Endothelial cell of umbilical vein (primary cell): ENCODE measurements at regions of chr19 and their contacts with region 1.

Region 1: GRCh38 chr19:18521885-18522624 is at the start of gene ELL:
- DNase-seq: peak; percentile 100
- H3K4me3 ChIP-seq: peak within 1 kb of the TSS; percentile 71 to 85 (median 82)
- H3K27ac ChIP-seq: peak within 1 kb of the TSS; percentile 89
- H3K4me1 ChIP-seq: peaks cover 12% of the 10 kb centered on the region
- H3K27me3 ChIP-seq: no peaks in the 10 kb centered on the region
- CTCF ChIP-seq: peak in 1 of 2 donors; percentile 7
- POLR2A ChIP-seq: peak; percentile 95
- total RNA-seq, gene ELL: 15.5 and 18.2 TPM in 2 replicates

Region 2: DNA sequence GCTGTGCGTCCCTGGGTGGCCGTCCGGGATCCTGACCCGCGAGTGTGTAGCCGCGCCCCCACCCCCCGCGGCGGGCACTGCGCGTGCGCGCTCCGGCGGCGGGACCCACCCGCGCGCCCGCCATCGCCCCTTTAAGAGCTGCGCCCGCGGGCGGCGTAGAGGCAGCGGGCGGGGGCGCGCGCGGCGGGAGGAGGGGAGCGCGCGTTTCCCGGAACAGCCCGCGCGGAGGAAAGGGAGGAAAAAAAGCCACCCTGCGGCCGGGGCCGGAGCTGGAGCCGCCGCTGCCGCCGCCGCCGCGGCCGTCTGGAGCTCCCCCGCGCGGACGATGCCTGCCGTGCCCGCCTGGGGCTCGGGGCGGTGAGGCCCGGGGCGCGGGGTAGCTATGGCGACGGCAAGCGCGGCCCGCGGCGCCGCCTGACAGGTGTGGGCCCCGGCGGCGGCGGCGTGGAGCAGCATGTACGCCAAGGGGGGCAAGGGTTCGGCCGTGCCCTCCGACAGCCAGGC is 102.8 kb before region 1 on chr19 and contains the start of gene SSBP4:
- CTCF ChIA-PET with region 1: no interaction called
- POLR2A ChIA-PET with region 1: no interaction called
- dilution Hi-C with region 1: no loop called
- intact Hi-C with region 1: loop called (anchors 2 kb)
- DNase-seq: peak; percentile 76
- H3K4me3 ChIP-seq: peak within 1 kb of the TSS; percentile 50 to 73 (median 53)
- H3K27ac ChIP-seq: peak within 1 kb of the TSS; percentile 54
- H3K4me1 ChIP-seq: peaks cover 46% of the 10 kb centered on the region
- H3K27me3 ChIP-seq: no peaks in the 10 kb centered on the region
- CTCF ChIP-seq: peak; percentile 19 to 31
- POLR2A ChIP-seq: peak; percentile 49
- total RNA-seq, gene SSBP4: 140 and 151 TPM in 2 replicates

Region 3: GRCh38 chr19:18488838-18489626 is 33.0 kb before region 1 on chr19:
- CTCF ChIA-PET with region 1: interaction called, 18 read pairs
- POLR2A ChIA-PET with region 1: no interaction called
- dilution Hi-C with region 1: no loop called
- intact Hi-C with region 1: loop called (anchors 1 kb)
- DNase-seq: peak; percentile 26
- H3K4me3 ChIP-seq: no peak overlapping the region
- H3K27ac ChIP-seq: no peak overlapping the region
- H3K4me1 ChIP-seq: peaks cover 9% of the 10 kb centered on the region
- H3K27me3 ChIP-seq: no peaks in the 10 kb centered on the region
- CTCF ChIP-seq: peak in 1 of 2 donors; percentile 42
- POLR2A ChIP-seq: no peak

Region 4: GRCh38 chr19:18542936-18543815 is 21.1 kb after region 1 on chr19 and contains the start of gene FKBP8:
- CTCF ChIA-PET with region 1: interaction called, 3 read pairs
- POLR2A ChIA-PET with region 1: interaction called, 4 read pairs
- dilution Hi-C with region 1: no loop called
- intact Hi-C with region 1: loop called (anchors 1 kb)
- DNase-seq: peak; percentile 87
- H3K4me3 ChIP-seq: peak within 1 kb of the TSS; percentile 61 to 85 (median 76)
- H3K27ac ChIP-seq: peak within 1 kb of the TSS; percentile 12
- H3K4me1 ChIP-seq: peaks cover 12% of the 10 kb centered on the region
- H3K27me3 ChIP-seq: no peaks in the 10 kb centered on the region
- CTCF ChIP-seq: no peak
- POLR2A ChIP-seq: no peak
- total RNA-seq, gene FKBP8: 150 and 164 TPM in 2 replicates

Region 5: GRCh38 chr19:18571564-18572300 is 49.7 kb after region 1 on chr19 and contains the start of gene UBA52:
- CTCF ChIA-PET with region 1: interaction called, 6 read pairs
- POLR2A ChIA-PET with region 1: interaction called, 5 read pairs
- dilution Hi-C with region 1: no loop called
- intact Hi-C with region 1: loop called (anchors 1 kb)
- DNase-seq: peak; percentile 98
- H3K4me3 ChIP-seq: peak within 1 kb of the TSS; percentile 66 to 91 (median 68)
- H3K27ac ChIP-seq: peak within 1 kb of the TSS; percentile 60
- H3K4me1 ChIP-seq: peaks cover 16% of the 10 kb centered on the region
- H3K27me3 ChIP-seq: no peaks in the 10 kb centered on the region
- CTCF ChIP-seq: no peak
- POLR2A ChIP-seq: peak; percentile 92
- total RNA-seq, gene UBA52: 1,218 and 1,221 TPM in 2 replicates

Region 6: DNA sequence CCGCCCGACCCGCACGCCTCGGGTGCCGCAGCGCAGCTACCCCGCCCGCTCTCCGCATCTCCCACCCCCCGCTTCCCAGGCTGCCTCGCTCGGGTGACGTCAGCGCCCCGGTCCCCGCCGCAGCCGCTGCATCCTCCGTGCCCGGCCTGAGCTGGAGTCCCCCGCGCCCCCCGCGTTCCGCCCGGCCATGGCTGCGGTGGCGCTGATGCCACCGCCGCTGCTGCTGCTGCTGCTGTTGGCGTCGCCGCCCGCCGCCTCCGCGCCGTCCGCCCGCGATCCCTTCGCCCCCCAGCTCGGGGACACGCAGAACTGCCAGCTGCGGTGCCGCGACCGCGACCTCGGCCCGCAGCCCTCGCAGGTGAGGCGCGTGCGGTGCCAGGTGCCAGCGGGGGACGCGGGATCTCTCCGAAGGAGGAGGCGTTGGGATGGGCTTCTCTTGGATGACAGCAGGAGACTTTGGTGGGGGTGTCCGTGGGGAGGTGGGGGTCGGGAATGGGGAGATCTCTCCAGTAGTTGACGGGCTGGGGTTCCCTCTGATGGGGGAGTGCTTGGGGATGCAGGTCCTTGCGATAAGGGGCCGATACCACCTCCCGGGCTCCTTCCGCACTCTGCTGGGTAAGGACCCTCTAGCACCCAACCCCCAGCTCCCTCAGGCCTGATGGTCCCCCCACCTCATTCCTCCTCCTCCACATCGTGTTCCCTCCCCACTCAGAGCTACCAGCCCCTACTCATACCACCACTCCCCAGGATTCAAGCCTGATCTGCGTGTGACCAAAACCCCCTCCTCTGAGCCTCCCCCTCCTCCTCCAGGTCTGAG is 90.9 kb after region 1 on chr19 and contains the start of gene TMEM59L:
- CTCF ChIA-PET with region 1: no interaction called
- POLR2A ChIA-PET with region 1: no interaction called
- dilution Hi-C with region 1: no loop called
- intact Hi-C with region 1: no loop called
- DNase-seq: no peak
- H3K4me3 ChIP-seq: peak within 1 kb of the TSS in 1 of 3 experiments; percentile 28
- H3K27ac ChIP-seq: no peak within 1 kb of the TSS
- H3K4me1 ChIP-seq: peaks cover 16% of the 10 kb centered on the region
- H3K27me3 ChIP-seq: peaks cover 57 to 64% of the 10 kb centered on the region in 2 experiments
- CTCF ChIP-seq: no peak
- POLR2A ChIP-seq: no peak
- total RNA-seq, gene TMEM59L: 0.25 and 0.97 TPM in 2 replicates